MCF 10A (cell line): ENCODE measurements at regions of chr1 and their contacts with region 1.

Region 1: DNA sequence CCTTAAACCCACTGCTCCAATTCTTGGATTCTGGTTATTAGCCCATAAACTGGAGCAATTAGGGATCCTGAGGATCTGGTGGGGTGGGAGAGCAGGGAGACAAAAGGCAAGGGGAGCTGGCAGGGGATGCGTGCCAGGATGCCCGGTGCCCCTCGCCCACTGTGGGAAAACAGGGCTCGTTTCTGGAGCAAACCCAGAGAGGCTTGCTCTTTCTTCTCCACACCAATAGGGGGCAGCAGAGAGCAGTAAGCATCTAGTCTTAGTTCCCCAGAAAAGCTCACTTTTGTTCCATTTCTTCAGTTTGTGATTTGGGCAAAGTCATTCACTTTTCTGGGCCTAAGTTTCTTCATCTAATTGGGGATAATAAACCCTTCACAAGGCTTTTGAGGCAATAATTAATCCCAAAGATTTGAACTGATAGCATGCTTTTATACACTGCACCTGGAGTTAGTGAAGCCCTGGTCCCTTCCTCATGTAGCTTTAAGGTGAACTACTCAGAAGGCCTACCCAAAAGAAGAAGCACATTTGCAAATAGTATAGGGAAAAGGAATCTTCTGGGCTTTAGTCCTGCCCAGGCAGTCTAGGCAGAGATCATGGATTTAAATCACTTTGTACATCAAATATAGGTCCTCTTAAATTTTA is 160.6 kb upstream of the USP24 start:
- DNase-seq: peak; percentile 72
- H3K4me3 Mint-ChIP-seq: no peak overlapping the region
- H3K27ac Mint-ChIP-seq: no peak overlapping the region
- H3K4me1 Mint-ChIP-seq: peaks cover 14% of the 10 kb centered on the region
- H3K27me3 Mint-ChIP-seq: no peaks in the 10 kb centered on the region
- CTCF ChIP-seq: peak; percentile 85

Region 2: DNA sequence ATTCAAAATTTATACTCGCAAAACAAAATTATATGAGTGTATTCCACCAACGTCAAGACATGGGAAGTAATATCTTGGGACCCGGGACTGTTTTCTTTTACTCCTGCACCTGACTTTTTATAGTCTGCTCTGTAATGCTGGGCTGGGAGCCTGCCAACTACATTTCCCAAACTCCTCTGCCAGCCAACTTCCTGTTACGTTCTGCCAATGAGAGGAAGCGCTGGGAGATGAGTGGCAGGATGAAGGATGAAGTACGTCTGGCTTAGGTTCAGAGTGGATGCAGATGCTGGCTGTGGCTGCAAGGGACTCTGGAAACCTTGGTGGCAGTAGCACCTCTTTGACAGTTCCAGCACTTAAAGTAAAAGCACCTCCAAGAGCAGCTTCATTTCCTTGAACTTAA is 220.2 kb before region 1 on chr1:
- CTCF ChIA-PET with region 1: no interaction called
- POLR2A ChIA-PET with region 1: no interaction called
- intact Hi-C with region 1: no loop called
- DNase-seq: peak; percentile 30
- H3K4me3 Mint-ChIP-seq: no peak overlapping the region
- H3K27ac Mint-ChIP-seq: no peak overlapping the region
- H3K4me1 Mint-ChIP-seq: no peaks in the 10 kb centered on the region
- H3K27me3 Mint-ChIP-seq: no peaks in the 10 kb centered on the region
- CTCF ChIP-seq: no peak

Region 3: DNA sequence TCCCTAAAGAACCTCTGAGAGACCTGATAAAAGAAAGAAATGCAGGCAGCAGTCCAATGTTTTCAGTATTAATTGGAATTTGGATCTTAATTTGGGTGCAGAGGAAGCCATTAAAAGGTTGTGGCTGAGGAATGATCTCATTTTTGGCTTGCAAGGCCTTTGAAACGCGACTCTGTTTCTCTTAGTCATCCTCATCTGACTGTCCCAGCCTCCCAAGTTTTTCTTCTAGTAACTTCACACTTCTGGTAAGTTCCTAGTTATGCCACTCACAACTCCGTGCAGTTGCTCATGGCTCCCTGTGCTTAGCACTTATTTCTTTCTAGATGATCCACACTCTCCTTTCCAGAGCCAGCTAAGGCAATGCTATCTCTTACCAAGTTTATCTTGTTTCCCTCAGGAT is 13.2 kb before region 1 on chr1:
- CTCF ChIA-PET with region 1: interaction called, 17 read pairs
- POLR2A ChIA-PET with region 1: no interaction called
- intact Hi-C with region 1: no loop called
- DNase-seq: peak; percentile 34
- H3K4me3 Mint-ChIP-seq: no peak overlapping the region
- H3K27ac Mint-ChIP-seq: no peak overlapping the region
- H3K4me1 Mint-ChIP-seq: peaks cover 8% of the 10 kb centered on the region
- H3K27me3 Mint-ChIP-seq: no peaks in the 10 kb centered on the region
- CTCF ChIP-seq: no peak

Region 4: GRCh38 chr1:55428944-55429931 is 53.5 kb after region 1 on chr1:
- CTCF ChIA-PET with region 1: interaction called, 18 read pairs
- POLR2A ChIA-PET with region 1: no interaction called
- intact Hi-C with region 1: loop called (anchors 2 kb)
- DNase-seq: peak; percentile 92
- H3K4me3 Mint-ChIP-seq: peak overlapping the region; percentile 3
- H3K27ac Mint-ChIP-seq: peak overlapping the region; percentile 78
- H3K4me1 Mint-ChIP-seq: peaks cover 20% of the 10 kb centered on the region
- H3K27me3 Mint-ChIP-seq: no peaks in the 10 kb centered on the region
- CTCF ChIP-seq: no peak

Region 5: GRCh38 chr1:55478742-55479141 is 103.0 kb after region 1 on chr1:
- CTCF ChIA-PET with region 1: interaction called, 9 read pairs
- POLR2A ChIA-PET with region 1: interaction called, 3 read pairs
- intact Hi-C with region 1: loop called (anchors 5 kb)
- DNase-seq: peak; percentile 40
- H3K4me3 Mint-ChIP-seq: no peak overlapping the region
- H3K27ac Mint-ChIP-seq: no peak overlapping the region
- H3K4me1 Mint-ChIP-seq: peaks cover 12% of the 10 kb centered on the region
- H3K27me3 Mint-ChIP-seq: no peaks in the 10 kb centered on the region
- CTCF ChIP-seq: peak; percentile 34

Region 6: DNA sequence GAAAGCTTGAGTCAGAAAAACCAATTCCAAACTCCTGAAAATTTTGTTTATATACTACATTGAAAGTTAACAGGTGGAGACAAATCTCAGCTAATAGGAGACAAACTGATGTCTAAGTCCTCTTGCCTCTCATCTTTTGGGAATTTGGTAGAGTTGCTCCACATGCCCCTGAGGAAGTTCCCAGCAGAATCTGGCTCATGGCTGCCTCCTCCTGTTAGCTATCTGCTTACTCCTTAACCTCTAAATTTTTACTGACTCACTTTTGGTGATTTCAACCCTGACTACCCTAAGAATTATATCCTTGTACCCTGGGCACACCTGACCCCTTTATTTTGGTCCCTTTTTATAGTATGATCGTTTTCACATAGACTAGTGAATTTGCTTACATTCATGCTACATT is 473.2 kb after region 1 on chr1:
- CTCF ChIA-PET with region 1: interaction called, 4 read pairs
- POLR2A ChIA-PET with region 1: no interaction called
- intact Hi-C with region 1: loop called (anchors 1 kb)
- DNase-seq: peak; percentile 53
- H3K4me3 Mint-ChIP-seq: no peak overlapping the region
- H3K27ac Mint-ChIP-seq: no peak overlapping the region
- H3K4me1 Mint-ChIP-seq: no peaks in the 10 kb centered on the region
- H3K27me3 Mint-ChIP-seq: no peaks in the 10 kb centered on the region
- CTCF ChIP-seq: peak; percentile 35

Region 7: DNA sequence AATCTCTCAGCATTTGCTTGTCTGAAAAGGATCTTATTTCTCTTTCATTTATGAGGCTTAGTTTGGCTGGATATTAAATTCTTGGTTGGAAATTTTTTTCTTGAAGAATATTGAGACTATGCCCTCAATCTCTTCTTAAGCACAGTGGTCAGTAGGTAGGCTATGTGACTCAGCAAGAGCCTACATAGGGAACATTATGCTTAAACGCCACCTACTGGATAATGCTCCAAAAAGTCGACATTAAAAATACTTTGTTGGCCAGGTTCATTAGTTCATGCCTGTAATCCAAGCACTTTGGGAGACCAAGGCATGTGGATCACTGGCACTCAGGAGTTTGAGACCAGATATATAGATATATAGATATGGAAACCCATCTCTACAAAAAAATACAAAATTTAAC is 517.4 kb after region 1 on chr1:
- CTCF ChIA-PET with region 1: interaction called, 9 read pairs
- POLR2A ChIA-PET with region 1: no interaction called
- intact Hi-C with region 1: loop called (anchors 1 kb)
- DNase-seq: peak; percentile 68
- H3K4me3 Mint-ChIP-seq: no peak overlapping the region
- H3K27ac Mint-ChIP-seq: no peak overlapping the region
- H3K4me1 Mint-ChIP-seq: no peaks in the 10 kb centered on the region
- H3K27me3 Mint-ChIP-seq: no peaks in the 10 kb centered on the region
- CTCF ChIP-seq: peak; percentile 41

Region 8: DNA sequence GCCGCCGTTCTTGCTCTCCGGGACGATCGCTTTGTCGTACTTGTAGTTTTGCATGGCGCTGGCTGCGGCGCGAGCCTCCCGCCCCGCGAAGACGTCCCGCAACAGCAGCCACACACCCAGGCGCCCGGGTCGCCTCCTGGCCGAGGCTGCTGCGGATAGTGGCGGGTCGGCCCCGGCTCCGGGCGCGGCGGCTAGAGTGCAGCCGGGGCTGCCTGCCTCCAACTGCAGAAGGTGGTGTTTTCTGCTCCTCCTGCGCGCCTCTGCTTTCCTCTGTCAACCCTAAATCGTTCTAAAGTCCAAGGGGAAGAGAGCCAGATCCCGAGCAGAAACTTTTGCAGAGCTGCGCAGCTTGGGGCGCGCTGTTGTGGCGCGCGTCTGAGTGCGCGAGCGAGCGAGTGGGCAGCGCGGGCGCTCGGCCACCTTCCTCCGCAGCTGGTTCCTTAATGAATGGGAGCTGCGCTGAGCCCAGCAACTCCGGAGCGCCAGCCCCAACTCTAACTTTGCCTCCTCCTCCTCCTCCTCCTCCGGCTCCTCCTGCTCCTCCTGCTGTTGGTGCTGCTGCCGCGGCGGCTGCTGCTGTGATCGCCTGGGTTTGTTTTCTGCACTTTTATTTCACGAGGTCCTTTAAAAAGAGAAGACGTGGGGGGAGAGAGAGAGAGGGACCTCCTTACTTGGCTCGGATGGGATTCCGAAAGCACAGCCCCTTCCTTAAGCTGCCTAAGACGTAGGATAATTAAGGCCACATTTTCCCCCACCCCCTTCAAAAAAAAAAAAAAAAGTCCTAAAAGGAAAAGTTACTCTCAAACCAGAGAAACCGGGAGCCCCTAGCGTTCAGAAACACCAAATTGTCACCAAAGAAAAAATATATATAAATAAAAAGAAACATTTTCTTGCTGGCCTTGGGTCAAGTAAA is 1203.5 kb after region 1 on chr1 and contains the start of gene PLPP3:
- CTCF ChIA-PET with region 1: interaction called, 28 read pairs
- POLR2A ChIA-PET with region 1: no interaction called
- intact Hi-C with region 1: loop called (anchors 1 kb)
- DNase-seq: peak; percentile 85
- H3K4me3 Mint-ChIP-seq: peak within 1 kb of the TSS; percentile 97
- H3K27ac Mint-ChIP-seq: peak within 1 kb of the TSS; percentile 33
- H3K4me1 Mint-ChIP-seq: no peaks in the 10 kb centered on the region
- H3K27me3 Mint-ChIP-seq: no peaks in the 10 kb centered on the region
- CTCF ChIP-seq: no peak
- total RNA-seq, gene PLPP3: 0.84 and 1.3 TPM in 2 replicates